Naive thymus-derived CD4-positive, alpha-beta T cell (primary cell): ENCODE measurements at regions of chr9 and their contacts with region 1.

Region 1: GRCh38 chr9:19925817-19926503 is 137.1 kb upstream of the SLC24A2 start:
- DNase-seq: peak; percentile 54 to 87 (median 82)
- ATAC-seq: peak; percentile 99
- H3K4me3 ChIP-seq: peak overlapping the region; percentile 42
- H3K4me3 Mint-ChIP-seq: peak overlapping the region; percentile 69 to 84 (median 79)
- H3K27ac ChIP-seq: no peak overlapping the region
- H3K27ac Mint-ChIP-seq: peak overlapping the region in 7 of 9 donors; percentile 23 to 53 (median 35)
- H3K4me1 ChIP-seq: peaks cover 0 to 7% of the 10 kb centered on the region in 2 donors
- H3K4me1 Mint-ChIP-seq: peaks cover 0 to 39% (median 8%) of the 10 kb centered on the region in 7 donors
- H3K27me3 ChIP-seq: no peaks in the 10 kb centered on the region
- H3K27me3 Mint-ChIP-seq: peaks cover 0 to 14% (median 3%) of the 10 kb centered on the region in 5 donors

Region 2: GRCh38 chr9:19464764-19465585 is 461.0 kb before region 1 on chr9:
- CTCF ChIA-PET with region 1: no interaction called
- POLR2A ChIA-PET with region 1: no interaction called
- intact Hi-C with region 1: loop called in 1 of 2 experiments (anchors 2 kb)
- DNase-seq: peak; percentile 48 to 82 (median 73)
- ATAC-seq: peak; percentile 94
- H3K4me3 ChIP-seq: peak overlapping the region; percentile 24
- H3K4me3 Mint-ChIP-seq: peak overlapping the region; percentile 71 to 97 (median 91)
- H3K27ac ChIP-seq: no peak overlapping the region
- H3K27ac Mint-ChIP-seq: peak overlapping the region in 6 of 9 donors; percentile 28 to 87 (median 70)
- H3K4me1 ChIP-seq: peaks cover 0 to 3% of the 10 kb centered on the region in 2 donors
- H3K4me1 Mint-ChIP-seq: peaks cover 4 to 17% (median 8%) of the 10 kb centered on the region in 7 donors
- H3K27me3 ChIP-seq: no peaks in the 10 kb centered on the region
- H3K27me3 Mint-ChIP-seq: peaks cover 0 to 4% (median 0%) of the 10 kb centered on the region in 5 donors

Region 3: GRCh38 chr9:20178197-20178596 is 252.2 kb after region 1 on chr9:
- CTCF ChIA-PET with region 1: no interaction called
- POLR2A ChIA-PET with region 1: no interaction called
- intact Hi-C with region 1: no loop called
- DNase-seq: no peak
- ATAC-seq: no peak
- H3K4me3 ChIP-seq: no peak overlapping the region
- H3K4me3 Mint-ChIP-seq: no peak overlapping the region
- H3K27ac ChIP-seq: no peak overlapping the region
- H3K27ac Mint-ChIP-seq: peak overlapping the region in 1 of 9 donors; percentile 60
- H3K4me1 ChIP-seq: no peaks in the 10 kb centered on the region
- H3K4me1 Mint-ChIP-seq: peaks cover 2 to 17% (median 10%) of the 10 kb centered on the region in 7 donors
- H3K27me3 ChIP-seq: no peaks in the 10 kb centered on the region
- H3K27me3 Mint-ChIP-seq: peaks cover 0 to 11% (median 0%) of the 10 kb centered on the region in 5 donors

Region 4: DNA sequence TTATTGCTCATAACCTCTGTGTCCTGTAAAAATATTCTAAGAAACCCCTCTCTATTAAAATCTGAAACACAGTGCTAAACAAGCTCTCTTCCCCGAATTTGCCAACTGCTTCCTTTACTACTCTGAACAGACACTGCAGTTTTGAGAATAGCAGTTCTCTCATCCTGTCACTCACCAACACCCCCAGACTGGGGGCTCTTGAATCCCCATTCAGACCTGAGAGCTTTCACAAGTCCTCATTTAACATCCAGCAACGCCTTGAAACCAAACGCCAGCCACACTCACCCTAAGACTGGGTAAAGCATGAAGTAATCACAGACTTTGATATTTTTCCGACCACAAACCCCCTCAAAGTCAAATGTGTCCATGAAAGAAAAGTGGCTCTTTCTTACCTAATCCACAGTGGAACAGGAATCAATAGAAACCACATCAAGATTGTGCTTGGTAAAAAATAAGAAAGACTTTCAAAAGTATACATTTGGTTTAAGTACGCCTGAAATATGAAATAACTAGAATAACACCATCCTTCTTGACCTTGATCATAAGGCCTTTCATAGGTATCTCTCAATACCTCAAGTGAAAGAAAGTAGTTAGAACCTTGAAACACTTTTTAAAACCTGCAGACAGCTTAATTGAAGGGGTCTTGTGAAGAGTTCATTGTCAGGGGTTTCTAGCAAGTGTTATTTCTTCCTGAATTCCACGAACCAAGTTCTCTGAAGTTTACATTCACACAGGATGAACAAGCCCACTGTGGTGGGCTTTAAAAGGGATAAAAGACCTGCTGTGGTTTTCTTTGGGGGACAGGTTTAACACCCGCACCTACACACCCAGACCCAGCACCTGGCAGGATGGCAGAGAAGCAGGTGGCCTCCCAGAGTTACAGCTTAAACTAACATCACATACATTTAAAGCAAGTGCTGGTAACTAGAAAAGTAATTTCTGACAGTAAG is 283.7 kb after region 1 on chr9:
- CTCF ChIA-PET with region 1: no interaction called
- POLR2A ChIA-PET with region 1: no interaction called
- intact Hi-C with region 1: loop called in 1 of 2 experiments (anchors 5 kb)
- DNase-seq: peak in 8 of 9 donors; percentile 49 to 78 (median 71)
- ATAC-seq: peak; percentile 86
- H3K4me3 ChIP-seq: no peak overlapping the region
- H3K4me3 Mint-ChIP-seq: peak overlapping the region; percentile 58 to 92 (median 70)
- H3K27ac ChIP-seq: no peak overlapping the region
- H3K27ac Mint-ChIP-seq: peak overlapping the region; percentile 65 to 94 (median 85)
- H3K4me1 ChIP-seq: peaks cover 17 to 30% of the 10 kb centered on the region in 2 donors
- H3K4me1 Mint-ChIP-seq: peaks cover 31 to 46% (median 41%) of the 10 kb centered on the region in 7 donors
- H3K27me3 ChIP-seq: no peaks in the 10 kb centered on the region
- H3K27me3 Mint-ChIP-seq: no peaks in the 10 kb centered on the region

Region 5: DNA sequence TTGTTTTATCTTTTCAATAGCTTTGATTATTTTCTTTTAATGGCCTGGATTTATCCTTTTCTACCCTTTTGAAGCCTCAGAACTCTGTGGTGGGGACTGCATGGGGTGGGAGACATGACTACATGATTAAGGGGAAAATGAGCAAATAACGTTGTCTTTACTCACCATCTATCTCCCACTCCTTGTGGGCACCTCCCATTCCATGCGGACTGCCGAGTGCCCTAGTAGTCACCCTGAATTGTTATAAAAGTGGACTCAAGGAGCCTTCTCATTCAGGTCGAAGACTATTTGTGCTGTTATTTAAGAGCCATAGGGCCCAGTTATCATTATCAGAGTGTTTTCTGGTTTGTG is 414.5 kb after region 1 on chr9:
- CTCF ChIA-PET with region 1: no interaction called
- POLR2A ChIA-PET with region 1: no interaction called
- intact Hi-C with region 1: loop called in 1 of 2 experiments (anchors 5 kb)
- DNase-seq: no peak
- ATAC-seq: no peak
- H3K4me3 ChIP-seq: no peak overlapping the region
- H3K4me3 Mint-ChIP-seq: no peak overlapping the region
- H3K27ac ChIP-seq: no peak overlapping the region
- H3K27ac Mint-ChIP-seq: peak overlapping the region in 8 of 9 donors; percentile 14 to 68 (median 53)
- H3K4me1 ChIP-seq: peaks cover 6 to 7% of the 10 kb centered on the region in 2 donors
- H3K4me1 Mint-ChIP-seq: peaks cover 4 to 64% (median 47%) of the 10 kb centered on the region in 7 donors
- H3K27me3 ChIP-seq: no peaks in the 10 kb centered on the region
- H3K27me3 Mint-ChIP-seq: no peaks in the 10 kb centered on the region

Region 6: GRCh38 chr9:20426019-20426418 is 500.1 kb after region 1 on chr9:
- CTCF ChIA-PET with region 1: no interaction called
- POLR2A ChIA-PET with region 1: no interaction called
- intact Hi-C with region 1: loop called in 1 of 2 experiments (anchors 5 kb)
- DNase-seq: no peak
- ATAC-seq: no peak
- H3K4me3 ChIP-seq: no peak overlapping the region
- H3K4me3 Mint-ChIP-seq: no peak overlapping the region
- H3K27ac ChIP-seq: no peak overlapping the region
- H3K27ac Mint-ChIP-seq: peak overlapping the region in 1 of 9 donors; percentile 21
- H3K4me1 ChIP-seq: peaks cover 3 to 4% of the 10 kb centered on the region in 2 donors
- H3K4me1 Mint-ChIP-seq: peaks cover 17 to 75% (median 62%) of the 10 kb centered on the region in 7 donors
- H3K27me3 ChIP-seq: no peaks in the 10 kb centered on the region
- H3K27me3 Mint-ChIP-seq: no peaks in the 10 kb centered on the region

Region 7: DNA sequence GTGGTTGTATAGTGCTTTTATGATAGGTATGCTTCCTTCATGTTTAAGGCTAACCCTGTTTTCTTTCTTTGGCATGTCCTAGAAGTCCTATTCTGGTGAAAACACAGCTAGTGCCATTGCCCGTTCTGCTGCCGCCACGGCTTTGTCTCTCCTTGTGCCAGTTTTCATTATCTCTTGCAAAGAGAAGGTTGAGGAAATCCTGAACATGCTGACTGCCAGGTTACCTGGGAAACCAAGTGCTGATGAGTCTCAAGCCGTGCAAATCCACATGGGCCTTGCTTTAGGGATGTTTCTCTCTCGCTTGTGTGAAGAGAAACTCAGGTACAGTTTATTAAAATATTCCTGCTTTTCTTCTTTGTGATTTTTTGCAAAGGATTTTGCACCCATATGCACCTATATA is 1003.3 kb after region 1 on chr9:
- CTCF ChIA-PET with region 1: no interaction called
- POLR2A ChIA-PET with region 1: no interaction called
- intact Hi-C with region 1: loop called in 1 of 2 experiments (anchors 5 kb)
- DNase-seq: no peak
- ATAC-seq: no peak
- H3K4me3 ChIP-seq: no peak overlapping the region
- H3K4me3 Mint-ChIP-seq: no peak overlapping the region
- H3K27ac ChIP-seq: no peak overlapping the region
- H3K27ac Mint-ChIP-seq: no peak overlapping the region
- H3K4me1 ChIP-seq: no peaks in the 10 kb centered on the region
- H3K4me1 Mint-ChIP-seq: peaks cover 0 to 27% (median 7%) of the 10 kb centered on the region in 7 donors
- H3K27me3 ChIP-seq: no peaks in the 10 kb centered on the region
- H3K27me3 Mint-ChIP-seq: no peaks in the 10 kb centered on the region

Region 8: GRCh38 chr9:21395778-21396717 is 1470.1 kb after region 1 on chr9:
- CTCF ChIA-PET with region 1: no interaction called
- POLR2A ChIA-PET with region 1: no interaction called
- intact Hi-C with region 1: loop called in 1 of 2 experiments (anchors 1 kb)
- DNase-seq: peak; percentile 35 to 65 (median 56)
- ATAC-seq: peak; percentile 83
- H3K4me3 ChIP-seq: peak overlapping the region; percentile 51
- H3K4me3 Mint-ChIP-seq: peak overlapping the region; percentile 39 to 81 (median 74)
- H3K27ac ChIP-seq: no peak overlapping the region
- H3K27ac Mint-ChIP-seq: peak overlapping the region in 1 of 9 donors; percentile 4
- H3K4me1 ChIP-seq: no peaks in the 10 kb centered on the region
- H3K4me1 Mint-ChIP-seq: peaks cover 5 to 13% (median 9%) of the 10 kb centered on the region in 7 donors
- H3K27me3 ChIP-seq: peaks cover 8 to 10% of the 10 kb centered on the region in 2 donors
- H3K27me3 Mint-ChIP-seq: peaks cover 52 to 84% (median 74%) of the 10 kb centered on the region in 5 donors